ENCODE measurements at regions of chr3 and their contacts with region 1.

Region 1: DNA sequence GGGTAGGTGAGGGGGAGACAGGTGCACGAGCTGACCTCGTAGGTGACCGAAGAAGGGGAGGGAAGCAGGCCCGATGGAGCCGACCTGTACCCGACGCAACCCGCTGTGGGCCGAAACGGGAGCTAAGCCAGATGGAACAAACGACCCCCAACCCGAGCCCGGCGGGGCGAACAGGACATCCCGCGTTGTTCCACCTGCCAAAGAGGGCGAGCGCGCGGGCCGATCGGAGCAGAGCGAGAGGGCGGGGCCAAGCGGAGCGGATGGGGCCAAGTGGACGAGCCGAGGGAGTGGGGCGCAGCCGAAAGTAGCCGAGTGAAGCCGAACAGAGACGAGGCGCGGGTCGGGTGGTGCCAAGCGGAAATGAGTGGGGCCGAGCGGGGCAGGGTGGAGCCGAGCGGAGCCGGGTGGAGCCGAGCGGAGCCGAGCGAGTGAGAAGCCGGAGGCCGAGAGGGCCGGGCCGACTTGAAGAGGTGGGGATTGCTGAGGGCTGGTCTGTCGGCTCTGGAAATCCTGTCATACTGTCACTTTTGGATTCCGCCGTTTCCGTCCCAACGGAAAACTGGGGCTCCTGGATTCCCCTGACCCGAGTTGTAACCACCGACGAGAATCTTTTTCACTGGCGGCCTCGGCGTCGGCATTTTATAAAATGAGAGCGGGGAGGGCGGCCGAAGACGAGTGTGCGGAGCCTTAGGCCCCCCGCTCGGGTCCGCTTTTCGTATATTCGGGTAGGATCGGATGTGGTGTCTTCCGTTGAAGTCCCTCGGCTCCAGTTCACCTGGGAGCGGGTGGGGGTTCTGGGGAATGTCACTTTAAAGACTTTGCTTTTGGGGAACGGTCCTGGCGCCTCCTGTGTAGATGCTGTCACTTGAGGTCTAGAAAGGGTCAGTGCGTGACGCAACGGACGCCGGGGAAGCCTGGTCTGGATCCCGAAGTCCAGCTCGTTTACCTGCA is 15.6 kb upstream of the WNT7A start:
- DNase-seq: peak; percentile 85 to 95 (median 93)
- ATAC-seq: peak; percentile 97
- H3K4me3 ChIP-seq: peak overlapping the region; percentile 84
- H3K4me3 Mint-ChIP-seq: peak overlapping the region; percentile 67 to 94 (median 90)
- H3K27ac ChIP-seq: peak overlapping the region; percentile 94
- H3K27ac Mint-ChIP-seq: peak overlapping the region; percentile 79 to 95 (median 88)
- H3K4me1 ChIP-seq: peaks cover 26 to 31% of the 10 kb centered on the region in 2 donors
- H3K4me1 Mint-ChIP-seq: peaks cover 5 to 47% (median 29%) of the 10 kb centered on the region in 7 donors
- H3K27me3 ChIP-seq: no peaks in the 10 kb centered on the region
- H3K27me3 Mint-ChIP-seq: peaks cover 0 to 9% (median 0%) of the 10 kb centered on the region in 5 donors

Region 2: DNA sequence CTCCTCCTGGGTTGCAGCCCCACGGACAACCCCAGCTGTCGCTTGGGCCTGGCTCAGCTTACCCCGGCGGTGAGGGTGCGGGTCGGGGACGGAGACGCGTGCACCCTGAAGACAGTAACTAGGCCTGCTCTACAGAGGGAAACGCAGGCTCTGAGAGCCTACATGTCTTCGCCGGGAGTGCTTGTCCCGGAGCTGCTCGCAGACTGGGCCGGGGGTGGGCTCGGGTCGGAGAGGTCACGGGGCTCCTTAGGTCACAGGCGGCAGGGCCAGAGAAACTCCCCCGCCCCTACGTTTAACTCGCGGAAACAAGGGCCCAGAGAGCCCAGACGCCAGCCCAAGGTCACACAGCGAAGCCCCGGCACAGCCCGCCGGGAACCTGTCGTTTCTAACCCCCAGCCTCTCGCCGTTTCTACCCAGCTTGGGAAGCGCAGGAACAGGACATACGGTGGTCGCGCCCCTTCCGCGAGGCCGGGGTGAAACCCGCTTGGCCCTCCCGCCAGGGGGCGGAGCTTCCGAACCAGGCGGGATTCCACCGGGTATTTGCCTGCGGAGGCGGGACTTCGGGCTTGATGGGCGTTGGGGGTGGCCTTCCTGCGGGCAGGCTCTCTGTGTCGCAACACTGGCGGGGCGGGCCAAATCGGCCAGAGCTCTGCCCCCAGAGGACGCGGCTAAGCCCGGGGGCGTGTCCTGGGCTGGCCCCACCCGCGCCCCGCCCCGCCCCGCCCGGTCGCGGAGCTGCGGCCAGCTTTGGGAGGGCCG is 415.7 kb before region 1 on chr3 and contains the start of gene HDAC11:
- CTCF ChIA-PET with region 1: no interaction called
- POLR2A ChIA-PET with region 1: interaction called, 8 read pairs
- intact Hi-C with region 1: loop called (anchors 1 to 5 kb)
- DNase-seq: peak; percentile 93 to 98 (median 95)
- ATAC-seq: peak; percentile 98
- H3K4me3 ChIP-seq: peak within 1 kb of the TSS; percentile 97
- H3K4me3 Mint-ChIP-seq: peak within 1 kb of the TSS; percentile 90 to 97 (median 94)
- H3K27ac ChIP-seq: peak within 1 kb of the TSS; percentile 98
- H3K27ac Mint-ChIP-seq: peak within 1 kb of the TSS; percentile 82 to 97 (median 94)
- H3K4me1 ChIP-seq: peaks cover 8 to 15% of the 10 kb centered on the region in 2 donors
- H3K4me1 Mint-ChIP-seq: peaks cover 4 to 22% (median 15%) of the 10 kb centered on the region in 7 donors
- H3K27me3 ChIP-seq: no peaks in the 10 kb centered on the region
- H3K27me3 Mint-ChIP-seq: peaks cover 0 to 13% (median 0%) of the 10 kb centered on the region in 5 donors
- total RNA-seq, gene HDAC11: 1.2 to 8.0 (median 7.3) TPM

Region 3: GRCh38 chr3:13932578-13933295 is 37.3 kb after region 1 on chr3:
- CTCF ChIA-PET with region 1: no interaction called
- POLR2A ChIA-PET with region 1: no interaction called
- intact Hi-C with region 1: no loop called
- DNase-seq: no peak
- ATAC-seq: no peak
- H3K4me3 ChIP-seq: peak overlapping the region; percentile 27
- H3K4me3 Mint-ChIP-seq: peak overlapping the region; percentile 59 to 83 (median 68)
- H3K27ac ChIP-seq: no peak overlapping the region
- H3K27ac Mint-ChIP-seq: peak overlapping the region in 1 of 9 donors; percentile 52
- H3K4me1 ChIP-seq: peaks cover 0 to 5% of the 10 kb centered on the region in 2 donors
- H3K4me1 Mint-ChIP-seq: peaks cover 0 to 5% (median 3%) of the 10 kb centered on the region in 7 donors
- H3K27me3 ChIP-seq: peaks cover 0 to 3% of the 10 kb centered on the region in 2 donors
- H3K27me3 Mint-ChIP-seq: peaks cover 0 to 54% (median 29%) of the 10 kb centered on the region in 5 donors

Region 4: DNA sequence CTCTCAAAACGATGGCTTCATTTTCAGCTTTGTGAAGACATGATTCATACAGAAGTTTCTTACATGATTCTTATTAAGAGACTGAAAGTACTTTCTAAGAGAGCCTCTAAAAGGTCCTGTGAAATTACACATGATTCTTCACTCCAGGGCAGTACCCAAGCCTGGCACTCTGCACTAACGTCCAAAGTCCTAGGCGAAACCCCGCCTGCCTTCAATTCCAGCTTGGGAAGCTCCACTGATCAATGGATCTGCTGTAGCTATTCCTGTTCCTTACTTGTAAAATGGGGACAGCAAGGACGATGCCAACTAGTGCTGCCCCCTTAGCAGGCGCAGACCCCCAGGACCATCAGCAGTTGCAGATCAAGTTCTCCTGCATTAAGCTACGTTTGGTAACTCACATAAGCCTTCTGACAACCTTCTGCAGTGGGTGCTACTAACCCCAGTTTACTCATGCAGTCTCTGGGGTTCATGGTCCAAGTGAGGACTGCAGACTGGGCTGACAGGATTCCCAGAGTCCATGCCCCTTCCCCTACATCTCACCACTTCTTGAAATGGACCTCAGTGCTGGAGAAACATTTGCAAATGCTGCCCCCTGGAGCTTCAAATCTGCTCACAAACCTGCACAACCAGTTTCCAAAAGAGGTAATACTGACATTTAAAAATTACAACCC is 218.7 kb after region 1 on chr3:
- CTCF ChIA-PET with region 1: interaction called, 3 read pairs
- POLR2A ChIA-PET with region 1: no interaction called
- intact Hi-C with region 1: loop called in 1 of 2 experiments (anchors 1 kb)
- DNase-seq: no peak
- ATAC-seq: no peak
- H3K4me3 ChIP-seq: no peak overlapping the region
- H3K4me3 Mint-ChIP-seq: no peak overlapping the region
- H3K27ac ChIP-seq: no peak overlapping the region
- H3K27ac Mint-ChIP-seq: no peak overlapping the region
- H3K4me1 ChIP-seq: no peaks in the 10 kb centered on the region
- H3K4me1 Mint-ChIP-seq: peaks cover 0 to 5% (median 0%) of the 10 kb centered on the region in 7 donors
- H3K27me3 ChIP-seq: no peaks in the 10 kb centered on the region
- H3K27me3 Mint-ChIP-seq: no peaks in the 10 kb centered on the region

Region 5: GRCh38 chr3:14203521-14204079 is 308.2 kb after region 1 on chr3:
- CTCF ChIA-PET with region 1: interaction called, 16 read pairs
- POLR2A ChIA-PET with region 1: interaction called, 3 read pairs
- intact Hi-C with region 1: loop called (anchors 1 to 2 kb)
- DNase-seq: peak in 6 of 9 donors; percentile 27 to 41 (median 33)
- ATAC-seq: peak; percentile 80
- H3K4me3 ChIP-seq: no peak overlapping the region
- H3K4me3 Mint-ChIP-seq: no peak overlapping the region
- H3K27ac ChIP-seq: no peak overlapping the region
- H3K27ac Mint-ChIP-seq: peak overlapping the region in 4 of 9 donors; percentile 12 to 83 (median 55)
- H3K4me1 ChIP-seq: peaks cover 0 to 5% of the 10 kb centered on the region in 2 donors
- H3K4me1 Mint-ChIP-seq: peaks cover 0 to 7% (median 5%) of the 10 kb centered on the region in 7 donors
- H3K27me3 ChIP-seq: no peaks in the 10 kb centered on the region
- H3K27me3 Mint-ChIP-seq: no peaks in the 10 kb centered on the region

Region 6: DNA sequence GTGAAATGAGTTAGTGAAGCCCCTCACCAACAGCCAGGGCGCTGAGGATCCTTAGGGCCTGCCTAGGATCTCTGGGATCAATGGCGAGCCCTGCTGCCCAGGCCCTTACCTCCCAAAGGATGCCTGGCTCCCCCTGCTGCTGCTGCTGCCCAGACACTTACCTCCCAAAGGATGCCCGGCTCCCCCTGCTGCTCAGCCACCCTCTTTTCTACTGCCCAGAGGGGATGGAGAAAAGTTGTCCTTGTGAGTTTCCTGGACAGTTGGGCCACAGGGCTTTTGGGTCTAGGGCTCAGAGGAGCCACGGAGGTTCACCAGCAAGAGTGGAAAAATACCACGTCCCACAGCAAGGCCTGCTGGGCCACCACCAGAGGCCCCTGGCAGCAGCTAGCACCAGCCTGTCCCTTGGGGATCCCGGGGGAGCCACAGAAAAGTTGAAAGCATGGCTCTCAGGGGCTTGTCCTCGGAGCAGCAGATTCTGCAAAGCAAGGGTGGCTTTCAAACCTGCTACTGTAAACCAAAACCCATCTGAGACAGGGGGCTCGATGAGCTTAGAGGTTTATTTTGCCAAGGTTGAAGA is 566.4 kb after region 1 on chr3:
- CTCF ChIA-PET with region 1: interaction called, 16 read pairs
- POLR2A ChIA-PET with region 1: interaction called, 3 read pairs
- intact Hi-C with region 1: loop called (anchors 1 kb)
- DNase-seq: peak in 6 of 9 donors; percentile 22 to 41 (median 32)
- ATAC-seq: peak; percentile 60
- H3K4me3 ChIP-seq: no peak overlapping the region
- H3K4me3 Mint-ChIP-seq: no peak overlapping the region
- H3K27ac ChIP-seq: peak overlapping the region; percentile 5
- H3K27ac Mint-ChIP-seq: peak overlapping the region in 1 of 9 donors; percentile 10
- H3K4me1 ChIP-seq: no peaks in the 10 kb centered on the region
- H3K4me1 Mint-ChIP-seq: peaks cover 0 to 20% (median 5%) of the 10 kb centered on the region in 7 donors
- H3K27me3 ChIP-seq: no peaks in the 10 kb centered on the region
- H3K27me3 Mint-ChIP-seq: no peaks in the 10 kb centered on the region

Region 7: GRCh38 chr3:14921078-14921616 is 1025.7 kb after region 1 on chr3:
- CTCF ChIA-PET with region 1: interaction called, 3 read pairs
- POLR2A ChIA-PET with region 1: no interaction called
- intact Hi-C with region 1: loop called (anchors 1 to 2 kb)
- DNase-seq: peak; percentile 66 to 85 (median 80)
- ATAC-seq: peak; percentile 94
- H3K4me3 ChIP-seq: no peak overlapping the region
- H3K4me3 Mint-ChIP-seq: no peak overlapping the region
- H3K27ac ChIP-seq: no peak overlapping the region
- H3K27ac Mint-ChIP-seq: peak overlapping the region in 1 of 9 donors; percentile 11
- H3K4me1 ChIP-seq: no peaks in the 10 kb centered on the region
- H3K4me1 Mint-ChIP-seq: peaks cover 0 to 4% (median 0%) of the 10 kb centered on the region in 7 donors
- H3K27me3 ChIP-seq: no peaks in the 10 kb centered on the region
- H3K27me3 Mint-ChIP-seq: peaks cover 0 to 6% (median 0%) of the 10 kb centered on the region in 5 donors

Measured in naive thymus-derived CD4-positive, alpha-beta T cell (primary cell).